ENCODE measurements at regions of chr12 and their contacts with region 1.

Region 1: GRCh38 chr12:6465467-6466183 is 4.9 kb downstream of the VAMP1 start:
- DNase-seq: peak; percentile 66
- H3K4me3 ChIP-seq: no peak overlapping the region
- CTCF ChIP-seq: peak; percentile 95

Region 2: GRCh38 chr12:6392504-6393077 is 73.0 kb before region 1 on chr12:
- in situ Hi-C with region 1: loop called (anchors 10 kb)
- DNase-seq: no peak
- H3K4me3 ChIP-seq: no peak overlapping the region
- CTCF ChIP-seq: no peak